Activated CD4-positive, alpha-beta memory T cell treated with anti-CD3 and anti-CD28 coated beads for 36 hours (primary cell): ENCODE measurements at regions of chr12 and their contacts with region 1.

Region 1: GRCh38 chr12:110826592-110827200 is 20.1 kb upstream of the CCDC63 start:
- DNase-seq: peak; percentile 94
- H3K4me3 Mint-ChIP-seq: no peak overlapping the region
- H3K27ac Mint-ChIP-seq: no peak overlapping the region
- H3K4me1 Mint-ChIP-seq: peaks cover 14% of the 10 kb centered on the region
- H3K27me3 Mint-ChIP-seq: peaks cover 4% of the 10 kb centered on the region

Region 2: DNA sequence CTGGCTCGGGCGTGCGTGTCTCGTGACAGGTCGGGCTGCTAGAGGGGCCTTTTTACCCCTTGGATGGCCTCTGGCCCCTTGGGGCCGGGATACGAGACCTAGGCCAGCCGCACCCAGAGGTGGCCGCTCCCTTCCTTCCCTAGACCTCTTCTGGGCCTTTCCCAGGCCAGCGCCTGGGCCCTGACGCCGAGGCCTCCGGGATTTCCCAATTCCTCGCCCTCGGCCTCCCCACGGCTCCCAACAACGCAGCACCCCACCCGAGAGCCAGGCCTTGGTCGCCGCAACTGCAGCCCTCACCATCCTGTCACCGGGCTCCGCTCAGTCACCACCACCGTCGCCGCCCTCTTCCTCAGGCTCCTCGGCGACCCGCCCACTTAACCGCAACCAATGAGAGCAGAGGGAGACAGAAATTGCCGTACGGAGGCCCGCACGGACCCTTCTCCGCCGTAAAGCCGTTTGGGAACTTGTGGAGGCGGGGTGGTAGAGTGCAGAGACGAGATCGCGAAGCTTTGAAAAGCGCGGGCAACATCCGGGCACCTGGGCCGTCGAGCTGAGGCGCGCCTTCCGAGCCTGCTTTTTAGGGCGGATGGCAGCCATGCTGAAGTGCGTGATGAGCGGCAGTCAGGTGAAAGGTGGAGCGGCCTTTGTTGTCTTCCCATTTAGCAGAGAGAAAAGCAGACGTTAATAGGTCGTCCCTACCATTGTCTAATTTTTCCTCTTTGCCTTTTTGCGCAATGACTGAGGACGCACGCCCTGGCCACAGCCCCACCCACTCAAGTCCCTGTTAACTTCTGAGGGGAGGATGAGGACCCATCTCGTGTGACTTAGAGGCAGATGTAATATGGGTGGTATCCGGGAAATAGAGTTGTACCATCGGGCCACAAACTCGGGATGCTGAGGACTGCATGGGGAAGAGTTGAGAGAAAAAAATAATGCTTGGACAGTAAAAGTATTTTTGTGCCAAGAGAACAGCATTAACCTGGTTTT is 324.7 kb before region 1 on chr12 and contains the starts of genes RAD9B and VPS29:
- CTCF ChIA-PET with region 1: no interaction called
- POLR2A ChIA-PET with region 1: no interaction called
- intact Hi-C with region 1: loop called (anchors 10 kb)
- DNase-seq: peak; percentile 100
- H3K4me3 Mint-ChIP-seq: peak within 1 kb of the TSS; percentile 99
- H3K27ac Mint-ChIP-seq: peak within 1 kb of the TSS; percentile 97
- H3K4me1 Mint-ChIP-seq: peaks cover 30% of the 10 kb centered on the region
- H3K27me3 Mint-ChIP-seq: no peaks in the 10 kb centered on the region
- total RNA-seq, gene RAD9B: 1.1 to 2.7 TPM
- total RNA-seq, gene VPS29: 100 to 106 TPM

Region 3: GRCh38 chr12:110528277-110528839 is 298.3 kb before region 1 on chr12:
- CTCF ChIA-PET with region 1: no interaction called
- POLR2A ChIA-PET with region 1: no interaction called
- intact Hi-C with region 1: no loop called
- DNase-seq: no peak
- H3K4me3 Mint-ChIP-seq: no peak overlapping the region
- H3K27ac Mint-ChIP-seq: no peak overlapping the region
- H3K4me1 Mint-ChIP-seq: peaks cover 19% of the 10 kb centered on the region
- H3K27me3 Mint-ChIP-seq: peaks cover 2% of the 10 kb centered on the region

Region 4: DNA sequence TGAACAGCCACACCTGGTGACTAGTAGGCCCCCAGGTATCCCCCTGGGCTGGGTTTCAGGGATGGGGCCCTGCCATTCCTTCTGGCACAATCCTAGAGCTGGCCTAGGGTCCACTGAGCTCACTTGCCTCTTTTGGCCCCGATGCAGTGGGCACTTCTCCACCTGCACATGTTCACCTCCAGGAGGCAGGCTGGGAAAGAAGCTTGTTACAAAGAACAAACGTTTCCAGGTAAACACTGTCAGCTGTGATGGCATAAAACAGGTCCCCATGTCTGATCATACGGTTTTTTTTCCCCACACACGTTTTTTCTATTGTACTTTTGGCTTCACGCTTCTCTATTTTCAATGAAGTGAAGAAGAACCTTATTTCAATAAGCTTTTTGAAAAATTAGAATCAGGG is 121.9 kb before region 1 on chr12:
- CTCF ChIA-PET with region 1: interaction called, 21 read pairs
- POLR2A ChIA-PET with region 1: no interaction called
- intact Hi-C with region 1: loop called (anchors 1 kb)
- DNase-seq: peak; percentile 33
- H3K4me3 Mint-ChIP-seq: no peak overlapping the region
- H3K27ac Mint-ChIP-seq: no peak overlapping the region
- H3K4me1 Mint-ChIP-seq: peaks cover 3% of the 10 kb centered on the region
- H3K27me3 Mint-ChIP-seq: no peaks in the 10 kb centered on the region

Region 5: DNA sequence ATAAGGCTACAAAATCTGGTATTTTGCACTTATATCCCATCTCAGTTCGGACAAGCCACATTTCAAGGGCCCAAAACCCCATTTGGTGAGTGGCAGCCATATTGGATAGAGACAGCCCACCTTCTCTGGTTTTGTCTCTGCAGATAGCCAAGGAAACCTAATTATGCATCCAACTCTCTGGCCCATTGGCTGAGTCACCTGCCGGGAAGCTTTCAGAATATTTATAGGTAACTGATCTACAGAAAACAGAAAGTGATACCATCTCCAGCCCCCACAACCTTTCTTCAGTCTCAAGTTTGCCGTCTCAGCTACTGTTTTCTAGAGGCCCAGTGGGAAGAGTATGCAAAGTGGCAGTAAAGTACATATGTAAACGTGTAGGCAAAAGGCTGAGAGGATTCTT is 50.3 kb before region 1 on chr12:
- CTCF ChIA-PET with region 1: interaction called, 3 read pairs
- POLR2A ChIA-PET with region 1: no interaction called
- intact Hi-C with region 1: loop called (anchors 1 kb)
- DNase-seq: peak; percentile 84
- H3K4me3 Mint-ChIP-seq: peak overlapping the region; percentile 34
- H3K27ac Mint-ChIP-seq: peak overlapping the region; percentile 94
- H3K4me1 Mint-ChIP-seq: peaks cover 69% of the 10 kb centered on the region
- H3K27me3 Mint-ChIP-seq: no peaks in the 10 kb centered on the region

Region 6: DNA sequence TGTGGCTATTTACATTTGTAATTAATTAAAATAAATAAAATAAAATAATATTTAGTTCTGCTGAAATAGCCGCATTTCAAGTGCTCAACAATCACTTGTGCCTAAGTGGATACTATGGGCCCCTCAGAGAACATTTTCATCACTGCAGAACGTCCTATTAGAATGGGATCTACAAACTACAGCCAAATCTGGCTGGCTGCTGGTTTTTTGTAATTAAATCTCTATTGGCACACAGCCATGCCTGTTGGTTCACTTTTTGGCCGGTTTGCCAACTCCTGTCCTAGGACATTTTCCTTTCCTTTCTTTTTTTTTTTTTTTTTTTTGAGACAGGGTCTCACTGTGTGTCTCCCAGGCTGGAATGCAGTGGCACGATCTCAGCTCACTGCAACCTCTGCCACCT is 29.8 kb after region 1 on chr12:
- CTCF ChIA-PET with region 1: no interaction called
- POLR2A ChIA-PET with region 1: no interaction called
- intact Hi-C with region 1: no loop called
- DNase-seq: no peak
- H3K4me3 Mint-ChIP-seq: no peak overlapping the region
- H3K27ac Mint-ChIP-seq: no peak overlapping the region
- H3K4me1 Mint-ChIP-seq: peaks cover 2% of the 10 kb centered on the region
- H3K27me3 Mint-ChIP-seq: peaks cover 4% of the 10 kb centered on the region